Mucosa of descending colon (tissue), 3 donors: ENCODE measurements at regions of chr10 and their contacts with region 1.

Region 1: DNA sequence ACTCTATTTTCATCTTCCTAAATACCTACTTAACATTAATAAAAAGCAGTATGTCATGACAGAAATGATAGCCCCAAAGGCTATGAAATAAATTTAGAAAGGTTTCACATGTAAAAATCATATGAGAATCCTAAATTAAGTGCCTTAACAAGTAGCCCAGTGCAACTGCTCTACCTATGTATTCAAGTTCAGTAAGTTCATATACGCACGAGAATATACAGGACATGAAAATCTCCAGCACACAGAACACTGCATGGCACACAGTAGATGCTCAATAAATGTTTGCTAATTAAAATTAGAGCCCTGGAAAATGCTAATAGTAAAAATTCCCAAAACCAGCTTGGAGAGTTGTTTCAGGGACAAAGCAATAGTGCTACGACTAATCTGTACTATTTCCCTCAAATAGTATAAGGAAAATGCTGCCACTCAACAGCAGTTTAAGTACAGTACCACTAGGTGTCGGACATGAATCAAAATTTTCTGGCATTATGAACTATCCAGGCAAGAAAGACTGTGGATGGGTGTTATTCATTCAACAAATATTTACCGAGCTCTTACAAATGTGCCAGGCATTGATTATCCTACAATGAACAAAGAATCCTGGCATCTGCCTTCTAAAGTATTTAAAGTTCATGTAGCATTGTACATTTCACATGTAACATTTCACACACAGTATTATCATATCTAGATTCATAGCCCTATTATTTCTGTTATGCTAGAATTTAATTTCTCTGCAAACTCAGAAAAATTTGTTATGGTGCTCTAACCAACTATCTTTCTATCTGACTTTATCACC is 80.9 kb downstream of the ARHGAP21 start:
- DNase-seq: peak in 1 of 3 donors; percentile 54
- ATAC-seq: peak; percentile 94
- H3K4me3 ChIP-seq: no peak overlapping the region
- H3K4me1 ChIP-seq: peaks cover 10% of the 10 kb centered on the region
- CTCF ChIP-seq: peak; percentile 58

Region 2: DNA sequence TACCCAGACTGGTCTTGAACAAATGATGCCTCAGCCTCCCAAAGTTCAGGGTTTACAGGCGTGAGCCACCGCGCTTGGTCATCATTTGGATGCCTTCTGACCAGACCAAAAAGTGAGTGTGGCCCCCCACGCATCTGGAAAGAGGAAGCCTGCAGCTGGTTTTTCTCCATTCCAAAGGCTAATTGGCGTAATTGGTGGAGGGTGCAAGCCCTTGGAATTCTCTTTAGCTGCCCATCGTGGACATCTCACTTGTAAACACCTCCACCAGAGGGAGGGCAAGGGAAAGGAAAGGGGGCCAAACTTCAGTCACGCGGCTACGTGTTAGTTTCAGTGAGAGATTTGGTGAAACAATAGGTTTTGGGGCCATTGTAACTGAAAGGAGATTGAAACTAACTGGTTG is 85.0 kb after region 1 on chr10:
- intact Hi-C with region 1: no loop called
- DNase-seq: no peak
- ATAC-seq: no peak
- H3K4me3 ChIP-seq: no peak overlapping the region
- H3K4me1 ChIP-seq: peaks cover 5% of the 10 kb centered on the region
- CTCF ChIP-seq: no peak

Region 3: GRCh38 chr10:25080880-25081581 is 438.2 kb after region 1 on chr10:
- intact Hi-C with region 1: loop called in 1 of 2 experiments (anchors 10 kb)
- DNase-seq: peak; percentile 59 to 94 (median 84)
- ATAC-seq: peak; percentile 92
- H3K4me3 ChIP-seq: no peak overlapping the region
- H3K4me1 ChIP-seq: peaks cover 15% of the 10 kb centered on the region
- CTCF ChIP-seq: peak; percentile 70